ENCODE measurements at regions of chr3 and their contacts with region 1.

Region 1: DNA sequence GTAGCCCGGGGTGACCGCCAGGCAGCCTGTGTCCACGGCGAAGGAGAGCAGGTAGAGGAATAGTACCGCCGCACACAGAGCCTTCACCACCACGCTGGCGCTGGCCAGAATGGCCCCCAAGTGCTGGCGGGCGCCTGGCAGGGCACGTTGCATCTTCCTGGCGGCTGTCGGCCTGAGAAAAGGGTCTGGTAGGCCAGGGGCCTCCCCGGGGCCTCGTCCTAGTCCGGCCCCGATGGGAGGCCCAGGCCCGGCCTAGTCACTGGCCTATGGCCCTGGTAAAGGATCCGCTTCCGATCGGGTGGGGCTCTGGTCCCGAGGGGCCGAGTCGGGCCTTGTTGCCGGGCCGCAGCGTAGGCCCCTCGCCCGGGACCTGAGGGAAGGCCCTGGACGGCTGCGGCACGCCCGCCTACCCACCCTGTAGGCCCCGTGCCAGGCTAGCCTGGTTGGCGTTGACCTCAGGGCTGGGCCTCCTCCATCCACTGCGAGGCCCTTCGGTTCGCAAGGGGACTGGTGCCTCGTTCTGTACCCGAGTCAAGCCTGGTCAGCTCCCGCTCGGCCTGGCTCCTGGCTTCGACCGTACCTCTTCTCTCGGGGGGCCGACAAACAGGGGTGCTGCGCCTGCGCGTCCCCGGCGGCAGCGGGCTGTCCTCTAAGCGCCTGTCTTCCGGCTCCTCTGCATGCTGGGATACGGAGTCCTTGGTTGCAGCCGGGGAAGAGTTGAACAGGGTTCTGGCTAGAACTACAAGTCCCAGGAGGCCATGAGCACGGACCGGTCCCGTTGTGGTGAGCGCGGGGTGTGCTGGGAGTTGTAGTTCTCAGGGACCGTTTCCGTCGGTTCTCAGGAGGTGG is at the start of gene TMEM115:
- DNase-seq: peak; percentile 71 to 99 (median 95)
- ATAC-seq: peak; percentile 100
- H3K4me3 ChIP-seq: peak within 1 kb of the TSS; percentile 88
- H3K4me3 Mint-ChIP-seq: peak within 1 kb of the TSS; percentile 91 to 99 (median 98)
- H3K27ac ChIP-seq: peak within 1 kb of the TSS; percentile 93
- H3K27ac Mint-ChIP-seq: peak within 1 kb of the TSS; percentile 73 to 98 (median 96)
- H3K4me1 ChIP-seq: peaks cover 30% of the 10 kb centered on the region in 2 donors
- H3K4me1 Mint-ChIP-seq: peaks cover 32 to 54% (median 43%) of the 10 kb centered on the region in 7 donors
- H3K27me3 ChIP-seq: no peaks in the 10 kb centered on the region
- H3K27me3 Mint-ChIP-seq: no peaks in the 10 kb centered on the region
- total RNA-seq, gene TMEM115: 17.7 to 32.4 (median 19.9) TPM

Region 2: DNA sequence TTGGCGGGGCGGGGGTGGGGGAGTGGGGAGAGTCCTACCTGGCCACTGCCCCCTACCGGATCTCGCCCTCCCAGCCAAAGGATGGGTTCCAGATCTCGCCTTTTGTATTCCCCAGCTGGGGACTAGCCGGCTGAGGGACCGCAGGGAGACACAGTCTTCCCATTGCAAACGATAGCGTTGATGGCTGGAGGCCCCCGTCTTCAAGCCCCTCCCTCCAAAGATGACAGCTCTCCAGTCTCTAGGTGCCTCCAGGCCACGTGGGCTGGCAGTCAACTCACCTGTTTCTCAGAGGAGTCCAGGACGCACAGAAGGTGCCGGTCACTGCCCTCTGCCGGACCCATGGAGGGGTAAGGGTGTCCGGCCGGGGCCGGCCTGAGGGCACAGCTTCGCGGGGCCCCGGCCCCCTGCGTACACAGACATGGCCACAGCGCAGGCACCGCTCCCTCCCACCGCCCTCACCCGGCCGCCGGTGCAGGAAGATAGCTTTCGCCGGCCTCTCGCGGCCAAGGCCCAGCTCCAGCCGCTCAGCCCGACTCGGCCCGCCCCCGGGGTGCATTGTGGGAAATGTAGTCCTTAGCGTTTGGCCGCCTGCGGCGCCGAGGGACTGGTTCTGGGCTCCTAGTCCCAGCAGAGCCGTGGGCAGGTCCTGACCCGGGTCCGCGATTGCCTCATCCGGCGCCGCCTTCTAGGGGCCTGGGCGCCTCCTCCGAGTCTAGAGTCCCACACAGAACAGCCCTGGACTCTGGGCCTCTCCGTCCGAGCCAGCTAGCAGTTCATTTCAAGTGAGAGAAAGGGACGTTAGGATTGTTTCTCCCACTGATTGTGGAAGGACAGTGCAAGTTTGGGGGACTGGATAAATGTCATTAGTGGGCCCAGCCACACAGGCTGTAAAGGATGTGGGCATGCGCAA is 429.5 kb before region 1 on chr3 and contains the start of gene MON1A:
- CTCF ChIA-PET with region 1: no interaction called
- POLR2A ChIA-PET with region 1: no interaction called
- intact Hi-C with region 1: loop called in 1 of 2 experiments (anchors 10 kb)
- DNase-seq: peak; percentile 65 to 94 (median 74)
- ATAC-seq: peak; percentile 97
- H3K4me3 ChIP-seq: peak within 1 kb of the TSS; percentile 92
- H3K4me3 Mint-ChIP-seq: peak within 1 kb of the TSS; percentile 82 to 90 (median 86)
- H3K27ac ChIP-seq: peak within 1 kb of the TSS; percentile 91
- H3K27ac Mint-ChIP-seq: peak within 1 kb of the TSS; percentile 78 to 92 (median 88)
- H3K4me1 ChIP-seq: peaks cover 6 to 13% of the 10 kb centered on the region in 2 donors
- H3K4me1 Mint-ChIP-seq: peaks cover 6 to 36% (median 31%) of the 10 kb centered on the region in 7 donors
- H3K27me3 ChIP-seq: no peaks in the 10 kb centered on the region
- H3K27me3 Mint-ChIP-seq: no peaks in the 10 kb centered on the region
- total RNA-seq, gene MON1A: 4.6 to 12.6 (median 8.6) TPM

Region 3: GRCh38 chr3:50088725-50089608 is 270.2 kb before region 1 on chr3 and contains the start of gene RBM5:
- CTCF ChIA-PET with region 1: no interaction called
- POLR2A ChIA-PET with region 1: no interaction called
- intact Hi-C with region 1: loop called in 1 of 2 experiments (anchors 2 kb)
- DNase-seq: peak; percentile 71 to 91 (median 89)
- ATAC-seq: peak; percentile 100
- H3K4me3 ChIP-seq: peak within 1 kb of the TSS; percentile 88
- H3K4me3 Mint-ChIP-seq: peak within 1 kb of the TSS; percentile 94 to 98 (median 96)
- H3K27ac ChIP-seq: peak within 1 kb of the TSS; percentile 98
- H3K27ac Mint-ChIP-seq: peak within 1 kb of the TSS; percentile 94 to 99 (median 97)
- H3K4me1 ChIP-seq: peaks cover 16 to 23% of the 10 kb centered on the region in 2 donors
- H3K4me1 Mint-ChIP-seq: peaks cover 24 to 36% (median 32%) of the 10 kb centered on the region in 7 donors
- H3K27me3 ChIP-seq: no peaks in the 10 kb centered on the region
- H3K27me3 Mint-ChIP-seq: no peaks in the 10 kb centered on the region
- total RNA-seq, gene RBM5: 223 to 420 (median 342) TPM

Region 4: GRCh38 chr3:50292159-50293078 is 66.7 kb before region 1 on chr3 and contains the start of gene IFRD2:
- CTCF ChIA-PET with region 1: no interaction called
- POLR2A ChIA-PET with region 1: interaction called, 3 read pairs
- intact Hi-C with region 1: loop called (anchors 1 kb)
- DNase-seq: peak; percentile 81 to 97 (median 94)
- ATAC-seq: peak; percentile 99
- H3K4me3 ChIP-seq: peak within 1 kb of the TSS; percentile 62
- H3K4me3 Mint-ChIP-seq: peak within 1 kb of the TSS; percentile 81 to 99 (median 88)
- H3K27ac ChIP-seq: peak within 1 kb of the TSS; percentile 79
- H3K27ac Mint-ChIP-seq: peak within 1 kb of the TSS; percentile 85 to 97 (median 93)
- H3K4me1 ChIP-seq: peaks cover 13 to 16% of the 10 kb centered on the region in 2 donors
- H3K4me1 Mint-ChIP-seq: peaks cover 16 to 22% (median 19%) of the 10 kb centered on the region in 7 donors
- H3K27me3 ChIP-seq: no peaks in the 10 kb centered on the region
- H3K27me3 Mint-ChIP-seq: no peaks in the 10 kb centered on the region
- total RNA-seq, gene IFRD2: 53.7 to 85.1 (median 64.7) TPM

Region 5: GRCh38 chr3:50327943-50328691 is 31.0 kb before region 1 on chr3 and contains the start of gene TUSC2:
- CTCF ChIA-PET with region 1: interaction called, 3 read pairs
- POLR2A ChIA-PET with region 1: interaction called, 656 read pairs
- intact Hi-C with region 1: loop called (anchors 1 kb)
- DNase-seq: peak; percentile 83 to 94 (median 92)
- ATAC-seq: peak; percentile 97
- H3K4me3 ChIP-seq: peak within 1 kb of the TSS; percentile 89
- H3K4me3 Mint-ChIP-seq: peak within 1 kb of the TSS; percentile 84 to 97 (median 95)
- H3K27ac ChIP-seq: peak within 1 kb of the TSS; percentile 92
- H3K27ac Mint-ChIP-seq: peak within 1 kb of the TSS; percentile 85 to 96 (median 94)
- H3K4me1 ChIP-seq: peaks cover 12 to 15% of the 10 kb centered on the region in 2 donors
- H3K4me1 Mint-ChIP-seq: peaks cover 7 to 41% (median 29%) of the 10 kb centered on the region in 7 donors
- H3K27me3 ChIP-seq: no peaks in the 10 kb centered on the region
- H3K27me3 Mint-ChIP-seq: no peaks in the 10 kb centered on the region
- total RNA-seq, gene TUSC2: 16.8 to 25.0 (median 20.5) TPM

Region 6: GRCh38 chr3:50375249-50375931 is 16.3 kb after region 1 on chr3:
- CTCF ChIA-PET with region 1: no interaction called
- POLR2A ChIA-PET with region 1: no interaction called
- intact Hi-C with region 1: no loop called
- DNase-seq: no peak
- ATAC-seq: no peak
- H3K4me3 ChIP-seq: no peak overlapping the region
- H3K4me3 Mint-ChIP-seq: no peak overlapping the region
- H3K27ac ChIP-seq: no peak overlapping the region
- H3K27ac Mint-ChIP-seq: no peak overlapping the region
- H3K4me1 ChIP-seq: no peaks in the 10 kb centered on the region
- H3K4me1 Mint-ChIP-seq: peaks cover 3 to 21% (median 11%) of the 10 kb centered on the region in 7 donors
- H3K27me3 ChIP-seq: no peaks in the 10 kb centered on the region
- H3K27me3 Mint-ChIP-seq: peaks cover 0 to 2% (median 0%) of the 10 kb centered on the region in 5 donors

Region 7: DNA sequence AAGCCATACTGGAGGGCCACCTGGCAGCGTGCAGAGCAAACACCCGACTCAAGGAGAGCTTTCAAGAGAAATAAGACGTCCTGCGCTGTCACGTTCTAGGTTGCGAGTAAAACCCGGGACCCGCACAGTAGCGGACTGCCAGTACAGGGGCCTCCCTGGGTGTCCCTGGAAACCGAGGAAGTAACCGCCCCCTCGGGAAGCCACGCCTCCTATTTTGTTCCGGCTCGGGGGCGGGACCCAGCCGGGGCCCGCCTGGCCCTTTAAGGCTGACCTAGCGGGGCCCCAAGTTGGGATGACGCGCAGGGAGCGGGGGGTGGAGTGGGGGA is 257.6 kb after region 1 on chr3:
- CTCF ChIA-PET with region 1: no interaction called
- POLR2A ChIA-PET with region 1: no interaction called
- intact Hi-C with region 1: loop called in 1 of 2 experiments (anchors 1 kb)
- DNase-seq: peak; percentile 87 to 97 (median 93)
- ATAC-seq: peak; percentile 78
- H3K4me3 ChIP-seq: peak overlapping the region; percentile 77
- H3K4me3 Mint-ChIP-seq: peak overlapping the region; percentile 87 to 97 (median 92)
- H3K27ac ChIP-seq: peak overlapping the region; percentile 64
- H3K27ac Mint-ChIP-seq: peak overlapping the region; percentile 88 to 96 (median 91)
- H3K4me1 ChIP-seq: peaks cover 61 to 63% of the 10 kb centered on the region in 2 donors
- H3K4me1 Mint-ChIP-seq: peaks cover 47 to 76% (median 71%) of the 10 kb centered on the region in 7 donors
- H3K27me3 ChIP-seq: no peaks in the 10 kb centered on the region
- H3K27me3 Mint-ChIP-seq: peaks cover 0 to 2% (median 0%) of the 10 kb centered on the region in 5 donors